CD8-positive, alpha-beta T cell (primary cell): ENCODE measurements at regions of chr19 and their contacts with region 1.

Region 1: GRCh38 chr19:17282488-17283255 is 971 bp downstream of the ANKLE1 start:
- DNase-seq: peak; percentile 62 to 87 (median 78)
- ATAC-seq: peak; percentile 95
- H3K4me3 ChIP-seq: peak overlapping the region; percentile 47 to 82
- H3K4me3 Mint-ChIP-seq: peak overlapping the region; percentile 80
- H3K27ac ChIP-seq: no peak overlapping the region
- H3K27ac Mint-ChIP-seq: no peak overlapping the region
- H3K4me1 ChIP-seq: peaks cover 4% of the 10 kb centered on the region
- H3K4me1 Mint-ChIP-seq: peaks cover 2% of the 10 kb centered on the region
- H3K27me3 ChIP-seq: peaks cover 0 to 7% of the 10 kb centered on the region in 2 experiments
- H3K27me3 Mint-ChIP-seq: no peaks in the 10 kb centered on the region
- CTCF ChIP-seq: peak; percentile 97

Region 2: DNA sequence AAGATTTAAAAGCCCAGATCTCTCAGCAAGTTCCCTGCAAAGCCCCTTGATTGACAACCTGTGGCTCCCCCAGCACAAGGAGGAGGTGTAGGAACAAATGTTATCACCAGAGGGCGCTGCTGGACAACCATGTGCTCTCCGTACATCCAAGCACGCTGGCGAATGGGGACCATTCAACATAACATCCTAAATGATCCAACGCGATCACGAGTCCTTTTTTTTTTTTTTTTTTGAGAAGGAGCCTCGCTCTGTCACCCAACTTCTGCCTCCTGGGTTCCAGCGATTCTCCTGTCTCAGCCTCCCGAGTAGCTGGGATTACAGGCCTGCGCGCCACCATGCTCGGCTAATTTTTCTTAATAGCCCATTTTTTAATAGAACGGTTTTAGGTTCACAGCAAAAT is 511.1 kb before region 1 on chr19:
- CTCF ChIA-PET with region 1: interaction called, 7 read pairs
- POLR2A ChIA-PET with region 1: no interaction called
- intact Hi-C with region 1: loop called in 1 of 2 experiments (anchors 1 kb)
- DNase-seq: peak; percentile 52 to 85 (median 76)
- ATAC-seq: peak; percentile 69
- H3K4me3 ChIP-seq: no peak overlapping the region
- H3K4me3 Mint-ChIP-seq: no peak overlapping the region
- H3K27ac ChIP-seq: no peak overlapping the region
- H3K27ac Mint-ChIP-seq: no peak overlapping the region
- H3K4me1 ChIP-seq: no peaks in the 10 kb centered on the region
- H3K4me1 Mint-ChIP-seq: no peaks in the 10 kb centered on the region
- H3K27me3 ChIP-seq: peaks cover 0 to 20% of the 10 kb centered on the region in 2 experiments
- H3K27me3 Mint-ChIP-seq: peaks cover 43% of the 10 kb centered on the region
- CTCF ChIP-seq: peak; percentile 74

Region 3: GRCh38 chr19:16886231-16886880 is 396.3 kb before region 1 on chr19:
- CTCF ChIA-PET with region 1: no interaction called
- POLR2A ChIA-PET with region 1: no interaction called
- intact Hi-C with region 1: no loop called
- DNase-seq: no peak
- ATAC-seq: no peak
- H3K4me3 ChIP-seq: no peak overlapping the region
- H3K4me3 Mint-ChIP-seq: no peak overlapping the region
- H3K27ac ChIP-seq: no peak overlapping the region
- H3K27ac Mint-ChIP-seq: no peak overlapping the region
- H3K4me1 ChIP-seq: no peaks in the 10 kb centered on the region
- H3K4me1 Mint-ChIP-seq: peaks cover 2% of the 10 kb centered on the region
- H3K27me3 ChIP-seq: no peaks in the 10 kb centered on the region
- H3K27me3 Mint-ChIP-seq: peaks cover 10% of the 10 kb centered on the region
- CTCF ChIP-seq: no peak

Region 4: DNA sequence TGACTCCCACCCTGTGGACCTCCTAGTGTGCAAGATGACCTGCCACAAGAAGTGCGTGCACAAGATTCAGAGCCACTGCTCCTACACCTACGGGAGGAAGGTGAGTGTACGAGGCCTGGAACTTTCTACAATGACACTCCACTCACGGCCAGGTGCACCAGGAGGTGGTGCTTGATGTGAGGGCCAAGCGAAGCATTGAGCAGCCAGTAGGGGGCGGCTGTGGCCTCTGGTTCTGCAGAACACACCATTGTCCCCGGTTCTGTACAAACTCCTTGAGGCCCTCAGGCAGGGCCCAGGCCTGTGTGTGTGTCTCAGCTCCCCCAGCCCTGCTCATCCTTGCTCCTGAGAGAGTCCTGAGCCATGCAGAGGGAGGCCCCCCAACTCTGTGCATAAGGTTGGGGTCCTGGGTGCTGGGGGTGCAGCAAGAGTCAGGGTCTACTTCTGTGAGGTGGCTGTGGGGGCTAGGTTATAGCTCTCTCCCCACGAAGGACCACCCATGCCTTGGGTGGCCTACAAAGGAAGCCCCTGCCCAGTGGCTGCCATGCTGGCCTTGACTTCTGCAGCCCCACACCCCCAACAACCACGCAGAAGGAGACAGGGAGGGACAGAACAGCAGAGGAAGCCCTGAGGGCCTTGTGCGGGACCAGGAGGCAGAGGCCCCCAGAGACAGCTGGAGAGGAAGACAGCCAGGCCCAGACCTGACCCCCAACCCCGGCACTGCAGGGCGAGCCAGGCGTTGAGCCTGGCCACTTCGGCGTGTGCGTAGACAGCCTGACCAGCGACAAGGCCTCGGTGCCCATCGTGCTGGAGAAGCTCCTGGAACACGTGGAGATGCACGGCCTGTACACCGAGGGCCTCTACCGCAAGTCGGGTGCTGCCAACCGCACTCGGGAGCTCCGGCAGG is 77.2 kb before region 1 on chr19:
- CTCF ChIA-PET with region 1: interaction called, 9 read pairs
- POLR2A ChIA-PET with region 1: no interaction called
- intact Hi-C with region 1: loop called (anchors 1 kb)
- DNase-seq: peak; percentile 37 to 74 (median 61)
- ATAC-seq: peak; percentile 64
- H3K4me3 ChIP-seq: no peak overlapping the region
- H3K4me3 Mint-ChIP-seq: no peak overlapping the region
- H3K27ac ChIP-seq: no peak overlapping the region
- H3K27ac Mint-ChIP-seq: no peak overlapping the region
- H3K4me1 ChIP-seq: no peaks in the 10 kb centered on the region
- H3K4me1 Mint-ChIP-seq: peaks cover 3% of the 10 kb centered on the region
- H3K27me3 ChIP-seq: no peaks in the 10 kb centered on the region
- H3K27me3 Mint-ChIP-seq: no peaks in the 10 kb centered on the region
- CTCF ChIP-seq: peak; percentile 35

Region 5: DNA sequence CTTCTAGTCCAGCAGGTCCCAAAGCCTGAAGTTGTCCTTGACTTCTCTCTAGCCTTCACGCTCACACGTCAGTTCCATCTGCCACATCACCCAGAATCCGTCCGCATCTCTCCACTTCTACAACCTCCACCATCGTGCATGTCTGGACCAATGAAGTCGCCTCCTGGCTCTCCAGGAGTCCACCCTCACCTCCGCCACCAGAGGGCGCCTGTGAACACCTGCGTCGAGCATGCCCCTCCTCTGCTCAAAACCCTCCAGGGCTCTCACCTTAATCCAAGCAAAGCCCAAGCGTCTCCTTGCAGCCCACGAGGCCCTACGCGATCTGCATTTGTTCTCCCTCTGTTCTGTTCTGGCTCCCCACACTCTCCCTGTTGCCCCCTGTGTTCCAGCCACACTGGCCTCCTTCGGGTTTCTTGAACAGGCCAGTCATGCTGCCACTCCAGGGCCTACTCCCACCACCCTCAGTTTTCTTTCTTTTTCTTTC is 21.8 kb before region 1 on chr19:
- CTCF ChIA-PET with region 1: interaction called, 148 read pairs
- POLR2A ChIA-PET with region 1: interaction called, 3 read pairs
- intact Hi-C with region 1: loop called (anchors 1 kb)
- DNase-seq: peak; percentile 81 to 95 (median 90)
- ATAC-seq: peak; percentile 100
- H3K4me3 ChIP-seq: no peak overlapping the region
- H3K4me3 Mint-ChIP-seq: no peak overlapping the region
- H3K27ac ChIP-seq: no peak overlapping the region
- H3K27ac Mint-ChIP-seq: no peak overlapping the region
- H3K4me1 ChIP-seq: peaks cover 12% of the 10 kb centered on the region
- H3K4me1 Mint-ChIP-seq: peaks cover 9% of the 10 kb centered on the region
- H3K27me3 ChIP-seq: no peaks in the 10 kb centered on the region
- H3K27me3 Mint-ChIP-seq: no peaks in the 10 kb centered on the region
- CTCF ChIP-seq: peak; percentile 69

Region 6: GRCh38 chr19:17327651-17328516 is 45.2 kb after region 1 on chr19:
- CTCF ChIA-PET with region 1: no interaction called
- POLR2A ChIA-PET with region 1: no interaction called
- intact Hi-C with region 1: no loop called
- DNase-seq: peak in 8 of 9 experiments; percentile 37 to 75 (median 55)
- ATAC-seq: peak; percentile 74
- H3K4me3 ChIP-seq: peak overlapping the region; percentile 59 to 73
- H3K4me3 Mint-ChIP-seq: peak overlapping the region; percentile 81
- H3K27ac ChIP-seq: peak overlapping the region; percentile 27 to 53
- H3K27ac Mint-ChIP-seq: peak overlapping the region; percentile 60
- H3K4me1 ChIP-seq: peaks cover 12% of the 10 kb centered on the region
- H3K4me1 Mint-ChIP-seq: peaks cover 22% of the 10 kb centered on the region
- H3K27me3 ChIP-seq: no peaks in the 10 kb centered on the region
- H3K27me3 Mint-ChIP-seq: no peaks in the 10 kb centered on the region
- CTCF ChIP-seq: no peak

Region 7: DNA sequence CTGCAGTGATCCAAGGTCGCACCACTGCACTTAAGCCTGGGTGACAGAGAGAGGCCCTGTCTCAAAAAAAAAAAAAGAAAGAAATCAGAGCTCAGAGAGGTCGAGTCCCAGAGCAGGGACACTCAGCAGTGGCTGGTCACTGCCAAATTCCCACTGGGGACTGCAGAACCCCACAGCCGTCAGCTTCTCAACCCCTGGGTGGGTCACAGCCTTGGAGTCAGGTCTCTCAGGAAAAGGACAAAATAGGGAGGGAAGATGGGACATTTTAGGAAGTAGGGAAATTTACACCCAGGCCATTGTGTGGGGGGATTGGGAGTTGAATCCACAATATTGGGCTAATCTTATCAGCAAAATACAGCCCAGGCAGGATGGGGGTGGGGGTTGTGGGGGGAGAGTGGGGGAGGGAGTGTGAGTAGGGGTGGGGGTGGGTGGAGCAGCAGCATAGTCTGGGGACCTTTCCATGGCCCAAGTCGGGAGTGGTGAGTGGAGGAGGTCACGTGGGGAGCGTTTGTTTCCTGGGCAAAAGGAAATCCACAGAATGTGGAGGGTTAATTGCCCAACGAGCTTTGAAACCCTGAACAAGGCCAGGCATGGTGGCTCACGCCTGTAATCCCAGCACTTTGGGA is 116.3 kb after region 1 on chr19:
- CTCF ChIA-PET with region 1: no interaction called
- POLR2A ChIA-PET with region 1: no interaction called
- intact Hi-C with region 1: no loop called
- DNase-seq: no peak
- ATAC-seq: no peak
- H3K4me3 ChIP-seq: no peak overlapping the region
- H3K4me3 Mint-ChIP-seq: no peak overlapping the region
- H3K27ac ChIP-seq: no peak overlapping the region
- H3K27ac Mint-ChIP-seq: no peak overlapping the region
- H3K4me1 ChIP-seq: peaks cover 20% of the 10 kb centered on the region
- H3K4me1 Mint-ChIP-seq: peaks cover 18% of the 10 kb centered on the region
- H3K27me3 ChIP-seq: no peaks in the 10 kb centered on the region
- H3K27me3 Mint-ChIP-seq: no peaks in the 10 kb centered on the region
- CTCF ChIP-seq: no peak

Region 8: DNA sequence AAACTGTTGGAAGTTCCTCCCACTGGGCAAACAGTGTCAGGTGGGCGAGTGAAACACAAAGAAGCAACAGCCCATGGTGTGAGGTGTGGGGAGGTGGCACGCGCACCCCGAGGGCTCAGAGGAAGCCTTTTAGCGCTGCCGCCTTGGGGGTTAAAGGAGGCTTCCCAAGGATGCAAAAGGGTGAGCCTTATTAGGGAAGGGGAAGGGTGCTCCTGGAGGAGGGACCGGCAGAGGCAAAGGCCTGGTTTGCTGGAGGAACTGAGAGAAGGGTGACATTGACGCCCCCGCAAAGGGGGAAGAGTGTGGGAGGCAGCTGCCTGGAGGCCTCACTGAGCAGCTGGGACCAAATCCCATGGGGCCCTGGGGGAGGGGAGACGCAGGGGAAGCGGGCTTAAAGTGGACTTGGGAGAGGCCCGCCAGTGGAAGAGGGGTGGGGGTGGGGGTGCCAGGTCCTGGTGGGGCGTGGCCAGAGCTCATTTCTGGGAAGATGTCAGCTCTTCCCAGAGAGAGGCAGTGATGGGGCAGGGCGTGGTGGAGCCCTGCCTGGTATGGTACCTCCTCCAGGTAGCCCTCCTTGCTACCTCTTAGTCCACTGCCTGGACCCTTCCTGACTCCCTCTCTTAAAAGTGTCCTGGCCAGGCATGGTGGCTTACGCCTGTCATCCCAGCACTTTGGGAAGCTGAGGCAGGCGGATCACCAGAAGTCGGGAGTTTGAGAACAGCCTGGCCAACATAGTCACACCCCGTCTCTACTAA is 456.6 kb after region 1 on chr19:
- CTCF ChIA-PET with region 1: no interaction called
- POLR2A ChIA-PET with region 1: no interaction called
- intact Hi-C with region 1: no loop called
- DNase-seq: no peak
- ATAC-seq: no peak
- H3K4me3 ChIP-seq: no peak overlapping the region
- H3K4me3 Mint-ChIP-seq: no peak overlapping the region
- H3K27ac ChIP-seq: no peak overlapping the region
- H3K27ac Mint-ChIP-seq: no peak overlapping the region
- H3K4me1 ChIP-seq: no peaks in the 10 kb centered on the region
- H3K4me1 Mint-ChIP-seq: no peaks in the 10 kb centered on the region
- H3K27me3 ChIP-seq: no peaks in the 10 kb centered on the region
- H3K27me3 Mint-ChIP-seq: no peaks in the 10 kb centered on the region
- CTCF ChIP-seq: no peak